Right ventricle myocardium inferior (tissue), 1 donor: ENCODE measurements at regions of chr4 and their contacts with region 1.

Region 1: GRCh38 chr4:41214136-41214824 is at the start of gene APBB2:
- DNase-seq: peak; percentile 96
- ATAC-seq: peak; percentile 97
- total RNA-seq, gene APBB2: 23.8 TPM

Region 2: GRCh38 chr4:40736910-40737309 is 477.4 kb before region 1 on chr4:
- intact Hi-C with region 1: loop called (anchors 10 kb)
- DNase-seq: no peak
- ATAC-seq: peak; percentile 28

Region 3: DNA sequence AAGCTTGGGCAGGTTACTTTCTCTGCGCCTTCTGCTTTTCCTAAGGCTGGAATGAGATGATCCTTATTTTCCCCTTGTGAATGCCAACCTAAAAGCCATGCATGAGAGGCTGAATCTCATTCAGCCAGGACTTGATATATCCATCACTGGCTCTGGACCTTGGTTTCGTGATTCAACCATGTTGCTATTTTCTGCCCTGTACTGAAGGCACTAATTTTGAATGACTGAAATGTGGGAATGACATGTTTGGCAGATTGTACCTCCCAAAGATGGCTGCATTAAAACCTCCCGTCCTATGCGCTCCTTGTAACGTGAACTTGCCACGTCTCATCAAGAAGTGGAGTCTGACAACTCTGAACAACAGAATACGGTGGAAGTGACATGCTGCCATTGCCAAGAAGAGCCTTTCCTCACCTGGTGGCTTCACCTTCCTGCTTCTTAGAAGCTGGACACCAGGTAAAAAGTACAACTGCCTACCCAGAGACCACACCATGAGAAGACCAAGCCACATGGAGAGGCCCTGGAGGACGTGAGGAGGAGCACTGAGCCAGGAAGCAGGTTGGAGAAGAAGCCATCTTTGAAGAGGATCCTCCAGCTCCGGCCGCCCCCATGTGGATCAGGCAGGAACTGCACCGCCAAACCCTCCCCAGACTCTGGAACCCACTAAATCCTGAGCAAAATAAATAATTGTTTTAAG is 290.0 kb before region 1 on chr4:
- intact Hi-C with region 1: loop called (anchors 1 kb)
- DNase-seq: peak; percentile 89
- ATAC-seq: peak; percentile 40

Region 4: GRCh38 chr4:40976343-40976742 is 237.9 kb before region 1 on chr4:
- intact Hi-C with region 1: loop called (anchors 1 kb)
- DNase-seq: no peak
- ATAC-seq: no peak

Region 5: GRCh38 chr4:41050866-41051775 is 163.2 kb before region 1 on chr4:
- intact Hi-C with region 1: loop called (anchors 2 kb)
- DNase-seq: no peak
- ATAC-seq: peak; percentile 49

Region 6: GRCh38 chr4:41102414-41103092 is 111.7 kb before region 1 on chr4:
- intact Hi-C with region 1: loop called (anchors 5 kb)
- DNase-seq: no peak
- ATAC-seq: no peak

Region 7: DNA sequence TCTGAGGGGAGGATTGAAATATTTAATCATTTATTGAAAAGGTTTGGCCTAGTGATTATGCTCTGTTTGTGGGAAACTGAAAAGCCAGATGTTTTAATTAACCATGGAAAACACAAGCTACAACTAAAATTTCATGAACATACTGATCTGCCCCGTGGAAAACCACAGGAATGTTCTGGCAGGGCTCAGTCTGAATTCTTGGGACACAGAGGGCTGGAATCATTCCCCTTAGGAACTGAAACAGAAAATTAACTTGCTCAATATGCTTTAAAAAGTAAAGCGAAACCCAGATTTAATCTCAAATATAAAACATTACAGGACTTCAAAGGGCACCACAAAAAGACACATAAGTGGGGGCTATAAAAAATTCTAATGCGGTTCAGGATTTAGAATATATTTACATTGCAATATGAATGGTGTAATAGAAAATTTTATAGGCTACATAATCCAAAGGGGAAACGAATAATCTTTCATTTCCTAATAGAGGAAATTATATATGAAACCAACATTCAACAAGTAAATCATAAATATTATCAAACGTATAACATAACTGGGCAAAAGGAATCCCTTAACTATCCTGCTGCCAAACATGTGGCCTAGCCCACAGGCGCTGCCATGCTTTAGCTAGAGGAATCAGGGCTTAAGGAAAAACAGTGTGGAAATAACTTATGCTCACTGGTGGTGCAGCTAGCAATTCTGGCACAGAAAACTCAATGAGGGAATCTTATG is 70.8 kb before region 1 on chr4:
- intact Hi-C with region 1: loop called (anchors 2 kb)
- DNase-seq: no peak
- ATAC-seq: peak; percentile 84